ENCODE measurements at regions of chr2 and their contacts with region 1.

Region 1: DNA sequence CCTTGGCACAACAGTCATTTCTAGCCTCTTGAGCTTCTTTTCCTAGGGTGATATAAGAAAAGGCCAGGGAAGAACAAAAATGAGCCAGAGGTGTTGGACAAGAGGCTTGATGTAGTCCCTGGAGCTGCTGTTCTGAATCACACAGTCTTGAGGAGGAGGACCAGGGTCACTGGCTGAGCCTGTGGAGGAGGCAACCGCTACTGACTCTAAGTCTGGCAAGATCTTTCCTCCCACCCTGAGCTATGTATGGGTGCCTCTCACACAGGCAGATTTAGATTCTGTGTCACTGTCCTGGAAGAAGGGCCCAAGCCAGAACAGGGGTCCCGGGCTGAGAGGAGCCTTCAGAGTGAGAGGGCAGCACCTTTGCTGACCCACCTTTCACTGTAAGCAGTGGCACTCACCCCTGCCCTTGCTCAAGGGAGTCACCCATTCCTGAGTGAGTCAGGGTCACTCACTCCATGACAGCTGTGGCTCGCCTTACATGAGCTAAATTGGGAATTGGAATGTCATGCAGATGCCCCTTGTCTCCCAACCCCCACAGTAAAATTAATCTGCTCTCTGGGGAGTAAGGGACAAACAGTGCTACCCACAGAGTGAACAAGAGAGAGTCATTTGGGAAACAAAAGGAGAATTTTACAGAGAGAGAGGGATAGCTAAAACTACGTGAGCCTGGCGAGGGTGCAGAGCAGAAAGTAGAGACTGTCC is at the start of gene TRIM54:
- DNase-seq: no peak
- H3K4me3 Mint-ChIP-seq: no peak within 1 kb of the TSS
- H3K27ac Mint-ChIP-seq: no peak within 1 kb of the TSS
- H3K4me1 Mint-ChIP-seq: peaks cover 6% of the 10 kb centered on the region
- H3K27me3 Mint-ChIP-seq: peaks cover 33% of the 10 kb centered on the region
- total RNA-seq, gene TRIM54: 0.26 TPM in 1 of 2 replicates, not detected in the other

Region 2: GRCh38 chr2:27095745-27096651 is 186.0 kb before region 1 on chr2:
- intact Hi-C with region 1: loop called (anchors 1 kb)
- DNase-seq: peak; percentile 32
- H3K4me3 Mint-ChIP-seq: peak overlapping the region; percentile 37
- H3K27ac Mint-ChIP-seq: no peak overlapping the region
- H3K4me1 Mint-ChIP-seq: peaks cover 16% of the 10 kb centered on the region
- H3K27me3 Mint-ChIP-seq: no peaks in the 10 kb centered on the region

Region 3: DNA sequence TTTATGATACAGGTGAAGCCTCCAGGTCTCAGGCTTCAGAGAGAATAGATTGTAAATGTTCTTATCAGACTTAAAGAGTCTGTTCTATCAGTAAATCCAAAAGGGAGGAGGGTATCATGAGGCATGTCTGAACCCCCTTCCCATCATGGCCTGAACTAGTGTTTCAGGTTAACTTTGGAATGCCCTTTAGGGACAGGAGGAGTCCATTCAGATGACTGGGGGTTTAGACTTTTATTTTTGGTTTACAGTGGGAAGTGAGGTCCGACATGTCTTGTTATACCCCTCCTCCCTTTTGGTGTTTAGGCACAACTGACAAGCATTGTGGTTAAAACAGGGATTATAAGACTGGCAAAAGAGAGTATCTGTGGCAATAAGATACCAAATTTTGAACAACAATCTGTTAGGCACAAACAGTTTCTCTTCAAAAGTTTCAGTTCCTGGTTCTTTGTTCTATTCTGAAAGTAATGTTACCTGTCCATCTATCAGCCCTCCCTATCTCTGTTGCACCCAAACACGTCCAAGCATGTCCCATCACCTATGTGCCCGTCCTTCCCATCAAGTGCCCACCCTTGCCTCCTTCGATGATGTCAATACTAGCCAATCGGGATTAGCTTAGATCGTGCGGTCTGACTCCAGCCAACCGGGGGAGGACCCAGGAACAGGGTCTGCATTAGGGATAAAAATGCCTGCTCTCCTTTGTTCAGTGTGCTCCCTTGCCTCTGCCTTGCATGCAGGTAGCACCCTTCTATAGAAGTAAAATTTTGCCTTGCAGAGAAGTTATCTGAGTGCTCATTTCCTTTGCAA is 116.8 kb before region 1 on chr2:
- intact Hi-C with region 1: loop called (anchors 5 kb)
- DNase-seq: no peak
- H3K4me3 Mint-ChIP-seq: no peak overlapping the region
- H3K27ac Mint-ChIP-seq: no peak overlapping the region
- H3K4me1 Mint-ChIP-seq: no peaks in the 10 kb centered on the region
- H3K27me3 Mint-ChIP-seq: peaks cover 17% of the 10 kb centered on the region

Region 4: DNA sequence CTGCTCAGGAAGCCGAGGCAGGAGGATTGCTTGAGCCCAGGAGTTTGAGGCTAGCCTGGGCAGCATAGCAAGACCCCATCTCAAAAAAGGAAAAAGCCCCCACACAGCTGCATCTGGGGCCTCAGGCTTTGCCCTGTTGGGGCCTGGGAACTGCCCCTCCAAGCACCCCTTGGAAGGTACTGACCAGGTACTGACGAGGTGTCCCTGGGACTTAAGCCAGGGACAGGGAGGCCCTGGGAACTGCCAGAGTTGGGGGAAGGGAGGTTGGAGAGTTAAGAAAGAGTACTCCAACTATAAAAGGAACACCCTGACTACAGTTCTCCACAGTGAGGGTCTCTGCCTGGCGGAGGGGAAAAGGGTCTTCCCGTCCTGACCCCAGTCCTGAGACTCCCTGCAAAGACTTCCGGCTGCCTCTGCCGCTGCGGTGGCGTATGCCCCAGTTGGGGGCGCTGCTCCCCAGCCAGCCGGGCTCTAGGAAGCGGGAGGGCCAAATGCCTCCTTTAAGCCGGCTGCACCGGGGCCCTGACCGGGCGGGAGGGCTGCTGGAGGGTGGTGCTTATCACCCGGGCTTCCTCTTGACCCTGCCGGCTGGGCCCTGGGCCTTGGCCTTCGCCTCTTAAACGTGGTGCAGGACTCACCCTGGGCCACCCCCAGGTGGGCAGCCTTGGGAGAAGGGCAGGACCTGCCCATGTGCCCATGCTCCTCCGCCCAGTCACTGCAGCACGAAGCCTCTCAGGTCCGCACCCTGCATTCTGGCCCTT is 31.9 kb before region 1 on chr2:
- intact Hi-C with region 1: loop called (anchors 1 kb)
- DNase-seq: peak; percentile 47
- H3K4me3 Mint-ChIP-seq: no peak overlapping the region
- H3K27ac Mint-ChIP-seq: no peak overlapping the region
- H3K4me1 Mint-ChIP-seq: no peaks in the 10 kb centered on the region
- H3K27me3 Mint-ChIP-seq: peaks cover 5% of the 10 kb centered on the region

Region 5: DNA sequence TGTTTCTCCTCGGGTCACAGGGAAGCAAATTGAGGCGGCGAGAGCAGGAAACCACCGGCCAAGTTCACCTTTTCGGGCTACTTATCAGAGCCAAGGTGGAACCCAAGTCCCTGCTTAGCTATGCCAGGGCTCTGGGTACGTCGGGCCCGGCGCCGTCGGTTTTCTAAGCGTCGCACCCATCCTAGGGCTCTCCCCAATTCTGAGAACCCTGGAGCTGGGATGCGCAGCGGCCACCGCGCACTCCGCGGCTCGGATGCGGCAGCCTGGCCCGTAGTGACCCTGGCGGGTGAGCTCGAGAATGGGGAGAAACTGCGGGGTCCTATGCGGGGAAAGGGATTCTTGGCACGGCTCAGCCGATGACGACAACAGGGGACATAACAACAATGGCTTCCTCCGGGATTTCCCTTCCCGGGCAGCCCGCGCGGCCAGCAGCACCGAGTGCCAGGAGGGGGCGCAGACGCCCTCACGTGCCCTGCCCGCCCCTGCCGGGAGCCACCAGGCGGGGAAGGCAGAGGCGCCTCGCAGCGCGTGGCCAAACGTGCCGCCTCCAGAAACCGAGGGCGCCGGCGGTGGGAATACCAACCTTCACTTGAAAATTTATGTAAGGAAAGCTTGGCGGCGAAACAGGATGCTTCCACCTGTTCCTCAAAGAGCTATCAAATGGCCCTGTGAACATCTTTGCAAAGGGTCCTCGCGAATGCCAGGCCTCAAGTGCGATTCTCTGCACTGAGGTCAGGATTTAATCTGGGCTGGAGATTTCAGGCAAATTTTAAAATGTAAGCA is 17.1 kb before region 1 on chr2:
- intact Hi-C with region 1: loop called (anchors 1 kb)
- DNase-seq: peak; percentile 32
- H3K4me3 Mint-ChIP-seq: peak overlapping the region; percentile 43
- H3K27ac Mint-ChIP-seq: peak overlapping the region; percentile 7
- H3K4me1 Mint-ChIP-seq: peaks cover 14% of the 10 kb centered on the region
- H3K27me3 Mint-ChIP-seq: peaks cover 44% of the 10 kb centered on the region

Region 6: GRCh38 chr2:27303093-27304025 is 21.4 kb after region 1 on chr2:
- intact Hi-C with region 1: loop called (anchors 1 kb)
- DNase-seq: peak; percentile 34
- H3K4me3 Mint-ChIP-seq: peak overlapping the region; percentile 58
- H3K27ac Mint-ChIP-seq: no peak overlapping the region
- H3K4me1 Mint-ChIP-seq: peaks cover 10% of the 10 kb centered on the region
- H3K27me3 Mint-ChIP-seq: peaks cover 17% of the 10 kb centered on the region

Measured in activated T-helper 1 cell treated with anti-CD3 and anti-CD28 coated beads, Interleukin-12 subunit alpha, Interleukin-12 subunit beta, Interleukin-2, Interleukin-4 antibody, amounts not matched to agents 30 ng/mL and 10 ng/mL and 1 ng/mL, durations not matched to agents 14 hours and 24 hours and 36 hours (primary cell).